ENCODE measurements at regions of chr19 and their contacts with region 1.

Region 1: GRCh38 chr19:1672038-1672768 is 19.8 kb upstream of the TCF3 start:
- DNase-seq: peak; percentile 52 to 73
- ATAC-seq: peak; percentile 67 to 76 (median 74)
- H3K4me3 ChIP-seq: no peak overlapping the region
- H3K4me3 Mint-ChIP-seq: peak overlapping the region; percentile 42
- H3K27ac ChIP-seq: no peak overlapping the region
- H3K27ac Mint-ChIP-seq: no peak overlapping the region
- H3K4me1 ChIP-seq: peaks cover 24% of the 10 kb centered on the region
- H3K4me1 Mint-ChIP-seq: peaks cover 0 to 5% of the 10 kb centered on the region in 2 donors
- H3K27me3 ChIP-seq: peaks cover 53% of the 10 kb centered on the region
- H3K27me3 Mint-ChIP-seq: peaks cover 17 to 38% of the 10 kb centered on the region in 2 donors
- CTCF ChIP-seq: peak; percentile 97

Region 2: DNA sequence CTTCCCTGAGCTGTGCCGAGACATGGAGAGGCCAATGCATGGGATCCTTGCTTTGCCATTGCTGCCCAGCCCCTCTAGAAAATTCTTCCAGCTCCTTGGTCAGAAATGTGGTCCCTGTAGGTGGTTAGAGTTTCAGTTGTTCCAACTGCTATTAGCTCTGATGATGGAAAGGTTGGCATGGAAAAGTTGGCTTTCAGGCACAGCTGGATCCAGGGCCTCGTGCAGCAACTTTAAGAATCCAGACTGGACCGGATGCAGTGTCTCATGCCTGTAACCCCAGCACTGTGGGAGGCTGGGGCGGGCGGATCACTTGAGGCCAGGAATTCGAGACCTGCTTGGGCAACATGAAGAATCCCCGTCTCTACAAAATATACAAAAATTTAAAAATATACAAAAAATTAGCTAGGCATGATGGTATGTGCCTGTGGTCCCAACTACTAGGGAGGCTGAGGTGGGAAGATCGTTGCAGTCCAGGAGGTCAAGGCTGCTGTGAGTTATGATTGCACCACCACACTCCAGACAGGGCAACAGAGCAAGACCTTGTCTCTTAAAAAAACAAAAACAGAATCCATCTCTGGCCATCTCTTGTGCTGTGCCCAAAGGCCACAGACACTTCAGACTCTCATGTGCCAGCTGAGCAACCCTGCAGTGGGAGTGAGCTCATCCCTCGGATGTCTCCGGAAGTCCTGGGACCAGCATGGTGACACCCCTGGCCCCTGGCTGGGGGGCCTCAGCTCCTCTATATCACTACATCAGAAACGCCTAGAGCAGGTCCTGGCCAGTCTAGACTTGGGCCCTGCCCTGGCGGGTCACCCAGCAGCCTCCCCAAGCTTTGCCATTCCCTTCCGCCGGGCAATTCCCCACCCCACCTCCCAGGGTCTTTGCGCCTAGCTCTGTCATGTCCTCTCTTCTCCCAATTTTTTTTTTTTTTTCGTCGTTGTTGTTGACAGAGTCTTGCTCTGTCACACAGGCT is 120.8 kb before region 1 on chr19:
- intact Hi-C with region 1: loop called (anchors 5 kb)
- DNase-seq: no peak
- ATAC-seq: no peak
- H3K4me3 ChIP-seq: no peak overlapping the region
- H3K4me3 Mint-ChIP-seq: no peak overlapping the region
- H3K27ac ChIP-seq: no peak overlapping the region
- H3K27ac Mint-ChIP-seq: no peak overlapping the region
- H3K4me1 ChIP-seq: peaks cover under 1% of the 10 kb centered on the region
- H3K4me1 Mint-ChIP-seq: peaks cover 0 to 1% of the 10 kb centered on the region in 2 donors
- H3K27me3 ChIP-seq: no peaks in the 10 kb centered on the region
- H3K27me3 Mint-ChIP-seq: peaks cover 0 to 6% of the 10 kb centered on the region in 2 donors
- CTCF ChIP-seq: no peak

Region 3: DNA sequence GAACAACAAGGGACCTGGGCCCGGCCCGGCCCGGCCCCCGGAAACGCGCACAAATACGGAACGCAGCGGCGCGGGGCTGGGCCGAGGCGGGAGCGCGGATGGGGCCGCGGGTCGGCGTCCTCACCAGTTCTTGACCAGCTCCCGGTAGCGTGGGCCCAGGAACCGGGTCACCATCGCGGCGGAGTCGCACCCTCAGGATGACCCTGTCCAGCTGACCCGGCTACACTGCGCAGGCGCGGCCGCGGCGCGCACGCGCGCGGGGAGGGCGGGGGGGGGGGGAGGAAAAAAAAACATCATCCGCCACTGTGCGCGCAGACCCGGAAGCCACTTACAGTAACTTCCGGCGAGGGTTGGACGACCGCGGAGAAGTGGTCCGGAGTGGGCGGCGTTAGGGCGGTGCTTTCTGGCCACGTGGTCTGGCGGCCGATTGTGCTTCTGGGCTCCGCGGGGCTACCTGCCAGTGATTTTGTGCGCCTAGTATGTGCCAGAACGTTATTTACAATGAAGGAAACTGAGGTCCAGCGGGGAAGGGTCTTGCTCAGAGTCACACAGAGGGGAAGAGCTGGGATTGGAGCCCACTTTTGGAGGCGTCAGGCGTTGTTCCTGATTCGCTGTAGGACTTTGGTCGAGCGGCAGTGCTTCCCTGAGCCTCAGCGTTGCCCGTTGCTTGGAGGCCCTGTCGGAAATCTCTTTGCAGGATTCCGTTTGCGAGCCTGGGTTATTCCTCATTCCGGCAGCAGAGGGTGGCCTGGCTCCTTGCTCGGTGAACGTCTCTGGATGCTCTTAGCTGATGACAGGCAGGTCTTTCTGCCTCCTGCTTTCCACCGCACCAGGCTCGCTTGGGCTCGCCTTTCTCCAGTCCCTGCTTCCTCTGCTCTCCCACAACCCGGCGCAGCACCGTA is 66.7 kb before region 1 on chr19 and contains the start of gene UQCR11:
- intact Hi-C with region 1: loop called (anchors 5 kb)
- DNase-seq: peak; percentile 91 to 96
- ATAC-seq: peak; percentile 84 to 94 (median 92)
- H3K4me3 ChIP-seq: peak within 1 kb of the TSS; percentile 95
- H3K4me3 Mint-ChIP-seq: peak within 1 kb of the TSS; percentile 97
- H3K27ac ChIP-seq: peak within 1 kb of the TSS; percentile 88
- H3K27ac Mint-ChIP-seq: peak within 1 kb of the TSS; percentile 97 to 98
- H3K4me1 ChIP-seq: peaks cover 65% of the 10 kb centered on the region
- H3K4me1 Mint-ChIP-seq: peaks cover 30 to 40% of the 10 kb centered on the region in 2 donors
- H3K27me3 ChIP-seq: no peaks in the 10 kb centered on the region
- H3K27me3 Mint-ChIP-seq: no peaks in the 10 kb centered on the region
- CTCF ChIP-seq: peak; percentile 22
- total RNA-seq, gene UQCR11: 91.2 to 142 (median 99.1) TPM

Region 4: GRCh38 chr19:1767464-1767933 is 95.3 kb after region 1 on chr19:
- intact Hi-C with region 1: loop called (anchors 2 kb)
- DNase-seq: peak; percentile 69 to 78
- ATAC-seq: peak; percentile 72 to 87 (median 82)
- H3K4me3 ChIP-seq: no peak overlapping the region
- H3K4me3 Mint-ChIP-seq: no peak overlapping the region
- H3K27ac ChIP-seq: no peak overlapping the region
- H3K27ac Mint-ChIP-seq: no peak overlapping the region
- H3K4me1 ChIP-seq: peaks cover 9% of the 10 kb centered on the region
- H3K4me1 Mint-ChIP-seq: peaks cover 0 to 6% of the 10 kb centered on the region in 2 donors
- H3K27me3 ChIP-seq: peaks cover 50% of the 10 kb centered on the region
- H3K27me3 Mint-ChIP-seq: peaks cover 37 to 57% of the 10 kb centered on the region in 2 donors
- CTCF ChIP-seq: peak; percentile 89